PC-9 (cell line): ENCODE measurements at regions of chr21 and their contacts with region 1.

Region 1: DNA sequence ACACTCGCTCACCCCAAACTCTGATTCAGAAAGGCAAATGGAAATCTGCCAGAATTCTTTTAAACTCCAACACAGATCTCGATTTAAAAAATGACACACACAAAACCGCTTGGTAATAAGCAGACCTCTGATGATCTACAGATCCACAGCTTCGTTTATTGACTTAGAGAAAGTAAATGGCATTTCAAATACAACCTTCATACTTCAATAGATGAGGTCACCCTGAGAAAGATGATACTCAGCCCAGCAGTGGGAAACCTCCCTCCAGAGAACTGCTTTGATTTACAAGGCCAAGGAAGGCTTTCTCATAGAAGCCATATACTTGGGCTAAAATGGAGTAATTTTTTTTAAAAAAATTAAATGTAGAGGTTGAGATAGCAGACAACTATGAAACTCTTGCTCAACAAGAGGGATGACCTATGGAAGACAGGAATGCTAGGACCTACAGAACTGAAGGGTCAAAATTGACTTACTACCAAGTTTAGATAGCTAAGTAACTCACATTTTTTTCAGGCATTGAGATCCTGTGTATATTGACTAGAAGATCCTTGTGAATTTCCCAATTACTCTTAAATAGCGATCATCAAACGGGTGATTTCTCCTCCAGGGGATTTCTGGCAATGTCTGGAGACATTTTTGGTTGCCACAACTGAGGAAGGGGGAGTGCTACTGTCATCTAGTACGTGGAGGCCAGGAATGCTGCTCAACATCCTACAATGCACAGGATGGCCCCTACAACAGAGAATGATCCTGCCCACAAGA is 143.9 kb downstream of the CLIC6 start:
- DNase-seq: peak in 1 of 2 experiments; percentile 75
- H3K4me3 ChIP-seq: no peak overlapping the region
- H3K27ac ChIP-seq: peak overlapping the region; percentile 100
- H3K4me1 ChIP-seq: peaks cover 79% of the 10 kb centered on the region
- H3K27me3 ChIP-seq: no peaks in the 10 kb centered on the region
- CTCF ChIP-seq: no peak

Region 2: GRCh38 chr21:34639882-34640788 is 172.6 kb before region 1 on chr21:
- CTCF ChIA-PET with region 1: no interaction called
- POLR2A ChIA-PET with region 1: interaction called, 10 read pairs
- intact Hi-C with region 1: no loop called
- DNase-seq: peak in 1 of 2 experiments; percentile 28
- H3K4me3 ChIP-seq: no peak overlapping the region
- H3K27ac ChIP-seq: no peak overlapping the region; the same call in 1 of the 2 replicates
- H3K4me1 ChIP-seq: no peaks in the 10 kb centered on the region; the same call in 1 of the 2 replicates
- H3K27me3 ChIP-seq: no peaks in the 10 kb centered on the region
- CTCF ChIP-seq: no peak

Region 3: GRCh38 chr21:34801519-34802132 is 11.1 kb before region 1 on chr21:
- CTCF ChIA-PET with region 1: no interaction called
- POLR2A ChIA-PET with region 1: no interaction called
- intact Hi-C with region 1: no loop called
- DNase-seq: no peak
- H3K4me3 ChIP-seq: no peak overlapping the region
- H3K27ac ChIP-seq: peak overlapping the region; percentile 14
- H3K4me1 ChIP-seq: peaks cover 53% of the 10 kb centered on the region
- H3K27me3 ChIP-seq: no peaks in the 10 kb centered on the region
- CTCF ChIP-seq: peak; percentile 39; the same call in 1 of the 2 replicates

Region 4: GRCh38 chr21:34836103-34836932 is 23.6 kb after region 1 on chr21:
- CTCF ChIA-PET with region 1: interaction called, 8 read pairs
- POLR2A ChIA-PET with region 1: no interaction called
- intact Hi-C with region 1: loop called (anchors 1 kb)
- DNase-seq: peak; percentile 83 to 96
- H3K4me3 ChIP-seq: peak overlapping the region; percentile 56
- H3K27ac ChIP-seq: peak overlapping the region; percentile 96
- H3K4me1 ChIP-seq: peaks cover 65% of the 10 kb centered on the region
- H3K27me3 ChIP-seq: no peaks in the 10 kb centered on the region
- CTCF ChIP-seq: no peak